ENCODE measurements at regions of chr17 and their contacts with region 1.

Region 1: GRCh38 chr17:77451245-77451893 is 310.6 kb downstream of the SEC14L1 start:
- DNase-seq: peak; percentile 85
- ATAC-seq: peak; percentile 24
- H3K4me3 Mint-ChIP-seq: peak overlapping the region; percentile 96
- H3K27ac Mint-ChIP-seq: peak overlapping the region; percentile 98
- H3K4me1 Mint-ChIP-seq: peaks cover 47% of the 10 kb centered on the region
- H3K27me3 Mint-ChIP-seq: no peaks in the 10 kb centered on the region

Region 2: GRCh38 chr17:76264755-76265596 is 1186.4 kb before region 1 on chr17 and contains the start of gene UBALD2:
- CTCF ChIA-PET with region 1: interaction called, 3 read pairs
- POLR2A ChIA-PET with region 1: no interaction called
- intact Hi-C with region 1: loop called in 1 of 2 experiments (anchors 10 kb)
- DNase-seq: peak; percentile 99
- ATAC-seq: peak; percentile 81
- H3K4me3 Mint-ChIP-seq: peak within 1 kb of the TSS; percentile 96
- H3K27ac Mint-ChIP-seq: peak within 1 kb of the TSS; percentile 100
- H3K4me1 Mint-ChIP-seq: peaks cover 52% of the 10 kb centered on the region
- H3K27me3 Mint-ChIP-seq: no peaks in the 10 kb centered on the region
- total RNA-seq, gene UBALD2: 299 to 639 TPM

Region 3: GRCh38 chr17:77088455-77089123 is 362.8 kb before region 1 on chr17:
- CTCF ChIA-PET with region 1: no interaction called
- POLR2A ChIA-PET with region 1: no interaction called
- intact Hi-C with region 1: loop called in 1 of 2 experiments (anchors 5 kb)
- DNase-seq: peak; percentile 89
- ATAC-seq: peak; percentile 83
- H3K4me3 Mint-ChIP-seq: peak overlapping the region; percentile 98
- H3K27ac Mint-ChIP-seq: peak overlapping the region; percentile 97
- H3K4me1 Mint-ChIP-seq: peaks cover 50% of the 10 kb centered on the region
- H3K27me3 Mint-ChIP-seq: no peaks in the 10 kb centered on the region

Region 4: DNA sequence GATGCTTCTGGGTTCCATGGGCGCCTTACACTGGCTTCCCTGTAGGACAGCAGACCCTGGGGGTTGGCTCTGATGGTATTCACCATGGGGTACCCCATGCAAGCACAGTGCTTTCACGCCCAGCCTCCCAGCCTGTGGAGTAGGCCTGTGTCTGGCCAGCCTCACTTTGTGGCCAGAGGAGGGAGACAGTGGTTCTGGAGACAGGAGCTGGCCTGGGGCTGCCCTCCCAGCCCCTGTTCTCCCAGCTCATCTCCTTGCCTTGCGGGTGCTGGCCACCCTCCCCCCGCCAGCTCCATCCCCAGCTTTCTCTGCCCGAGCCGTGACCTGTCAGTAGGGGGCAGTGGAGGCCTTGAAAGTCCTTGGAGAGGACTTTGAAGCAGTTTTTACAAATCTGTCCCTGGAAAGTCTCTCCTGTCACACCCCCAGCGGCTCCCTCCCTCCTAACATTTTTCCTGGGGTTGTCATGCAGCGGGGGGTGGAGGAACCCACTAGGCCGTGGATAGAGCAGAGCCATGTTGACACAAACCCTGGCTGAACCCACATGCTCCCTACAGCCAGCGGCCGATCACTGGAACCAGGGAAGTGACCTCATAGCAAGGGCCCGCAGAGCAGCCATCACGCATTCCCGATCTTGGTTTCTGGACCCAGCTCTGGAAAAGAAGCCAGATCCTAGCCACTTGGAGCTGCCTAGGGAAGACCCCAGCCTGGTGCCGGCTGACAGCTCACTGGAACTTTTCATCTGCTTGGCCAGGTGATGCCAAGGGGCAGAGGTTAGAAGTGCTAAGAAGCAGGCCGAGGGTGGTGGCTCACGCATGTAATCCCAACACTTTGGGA is 21.2 kb before region 1 on chr17:
- CTCF ChIA-PET with region 1: interaction called, 27 read pairs
- POLR2A ChIA-PET with region 1: interaction called, 5 read pairs
- intact Hi-C with region 1: loop called in 1 of 2 experiments (anchors 2 kb)
- DNase-seq: peak; percentile 92
- ATAC-seq: peak; percentile 47
- H3K4me3 Mint-ChIP-seq: no peak overlapping the region
- H3K27ac Mint-ChIP-seq: peak overlapping the region; percentile 13
- H3K4me1 Mint-ChIP-seq: peaks cover 91% of the 10 kb centered on the region
- H3K27me3 Mint-ChIP-seq: no peaks in the 10 kb centered on the region

Region 5: GRCh38 chr17:77471984-77472461 is 20.7 kb after region 1 on chr17:
- CTCF ChIA-PET with region 1: interaction called, 21 read pairs
- POLR2A ChIA-PET with region 1: interaction called, 4 read pairs
- intact Hi-C with region 1: no loop called
- DNase-seq: no peak
- ATAC-seq: no peak
- H3K4me3 Mint-ChIP-seq: peak overlapping the region; percentile 70
- H3K27ac Mint-ChIP-seq: peak overlapping the region; percentile 86
- H3K4me1 Mint-ChIP-seq: peaks cover 96% of the 10 kb centered on the region
- H3K27me3 Mint-ChIP-seq: no peaks in the 10 kb centered on the region

Region 6: GRCh38 chr17:77494664-77495435 is 43.5 kb after region 1 on chr17:
- CTCF ChIA-PET with region 1: interaction called, 5 read pairs
- POLR2A ChIA-PET with region 1: no interaction called
- intact Hi-C with region 1: loop called in 1 of 2 experiments (anchors 5 kb)
- DNase-seq: peak; percentile 84
- ATAC-seq: peak; percentile 58
- H3K4me3 Mint-ChIP-seq: no peak overlapping the region
- H3K27ac Mint-ChIP-seq: peak overlapping the region; percentile 63
- H3K4me1 Mint-ChIP-seq: peaks cover 4% of the 10 kb centered on the region
- H3K27me3 Mint-ChIP-seq: no peaks in the 10 kb centered on the region

Measured in activated CD4-positive, alpha-beta T cell treated with anti-CD3 and anti-CD28 coated beads for 36 hours (primary cell).